Dorsolateral prefrontal cortex (tissue), 120 donors: ENCODE measurements at regions of chr19 and their contacts with region 1.

Region 1: DNA sequence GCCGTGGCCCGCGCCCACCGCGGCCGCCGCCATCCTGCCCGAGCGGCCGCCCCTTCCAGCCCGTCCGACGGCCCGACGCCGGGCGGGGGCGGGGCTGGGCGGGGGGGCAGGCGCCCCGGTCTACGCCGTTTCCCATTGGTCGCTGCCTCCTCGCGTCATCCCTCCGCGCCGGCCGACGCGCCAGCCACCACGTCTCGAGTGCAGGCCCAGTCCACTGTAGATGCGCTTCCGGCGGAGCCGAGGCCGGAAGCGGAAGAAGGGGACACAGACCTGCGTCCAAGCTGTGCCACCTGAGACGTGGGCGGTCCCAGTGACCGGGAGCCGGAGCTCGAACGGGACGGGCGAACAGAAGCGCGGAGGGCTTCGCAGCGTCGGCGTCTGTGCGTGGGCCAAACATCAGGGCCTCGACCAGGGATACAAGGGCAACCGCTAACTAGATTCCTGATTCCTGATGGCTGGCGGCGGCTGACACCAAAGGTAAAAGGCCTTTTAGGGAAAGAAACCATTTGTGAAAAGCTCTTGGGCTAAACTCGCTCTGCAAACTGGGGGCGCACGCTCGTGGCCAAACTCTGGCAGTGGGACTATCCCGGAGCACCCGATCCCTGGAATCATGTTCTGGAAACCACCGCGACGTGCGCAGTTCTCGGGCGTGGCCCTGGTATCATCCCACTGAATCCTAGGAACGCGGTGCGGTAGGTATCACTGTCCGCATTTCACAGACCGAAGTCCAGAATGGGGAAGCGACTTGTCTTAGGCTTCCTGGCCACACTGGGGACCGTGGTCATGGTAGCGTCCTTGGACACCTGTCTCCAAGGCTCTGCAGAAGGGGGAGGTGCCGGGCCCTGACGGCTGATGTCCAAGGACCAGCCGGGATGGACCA is at the start of gene SLC35E1:
- DNase-seq: peak; percentile 89 to 96 (median 94)
- H3K4me3 ChIP-seq: peak within 1 kb of the TSS; percentile 68 to 99 (median 90)
- H3K27ac ChIP-seq: peak within 1 kb of the TSS in 58 of 59 donors; percentile 1 to 92 (median 77)
- H3K27me3 ChIP-seq: no peaks in the 10 kb centered on the region
- CTCF ChIP-seq: peak in 17 of 56 donors; percentile 6 to 37 (median 23)
- total RNA-seq, gene SLC35E1: 27.5 to 64.1 (median 42.2) TPM

Region 2: GRCh38 chr19:16542045-16542909 is 30.3 kb before region 1 on chr19 and contains the start of gene CHERP:
- intact Hi-C with region 1: loop called (anchors 1 to 2 kb)
- DNase-seq: peak; percentile 86 to 95 (median 92)
- H3K4me3 ChIP-seq: peak within 1 kb of the TSS; percentile 66 to 100 (median 94)
- H3K27ac ChIP-seq: peak within 1 kb of the TSS; percentile 20 to 97 (median 87)
- H3K27me3 ChIP-seq: no peaks in the 10 kb centered on the region
- CTCF ChIP-seq: peak in 37 of 56 donors; percentile 7 to 66 (median 32)
- total RNA-seq, gene CHERP: 35.1 to 67.0 (median 47.9) TPM

Region 3: GRCh38 chr19:16608290-16608739 is 35.7 kb after region 1 on chr19:
- intact Hi-C with region 1: no loop called
- DNase-seq: peak in 1 of 10 donors; percentile 46
- H3K4me3 ChIP-seq: peak overlapping the region in 1 of 59 donors; percentile 4
- H3K27ac ChIP-seq: peak overlapping the region in 46 of 59 donors; percentile 1 to 82 (median 48)
- H3K27me3 ChIP-seq: no peaks in the 10 kb centered on the region
- CTCF ChIP-seq: no peak